ENCODE measurements at regions of chr18 and their contacts with region 1.

Region 1: GRCh38 chr18:70454704-70455322 is 166.0 kb downstream of the SOCS6 start:
- DNase-seq: peak; percentile 79
- ATAC-seq: peak; percentile 86
- H3K4me3 ChIP-seq: no peak overlapping the region
- H3K27ac ChIP-seq: no peak overlapping the region
- H3K4me1 ChIP-seq: peaks cover 2% of the 10 kb centered on the region; the same call in 1 of the 2 replicates
- H3K27me3 ChIP-seq: no peaks in the 10 kb centered on the region
- CTCF ChIP-seq: peak; percentile 76
- POLR2A ChIP-seq: no peak
- RAD21 ChIP-seq: peak; percentile 77

Region 2: GRCh38 chr18:70082430-70082829 is 372.4 kb before region 1 on chr18:
- CTCF ChIA-PET with region 1: no interaction called
- POLR2A ChIA-PET with region 1: no interaction called
- dilution Hi-C with region 1: no loop called
- in situ Hi-C with region 1: no loop called
- intact Hi-C with region 1: loop called (anchors 5 kb)
- DNase-seq: no peak
- ATAC-seq: no peak
- H3K4me3 ChIP-seq: no peak overlapping the region
- H3K27ac ChIP-seq: no peak overlapping the region
- H3K4me1 ChIP-seq: peaks cover 1% of the 10 kb centered on the region; the same call in 1 of the 2 replicates
- H3K27me3 ChIP-seq: no peaks in the 10 kb centered on the region
- CTCF ChIP-seq: no peak
- POLR2A ChIP-seq: no peak
- RAD21 ChIP-seq: no peak

Region 3: GRCh38 chr18:70172225-70172624 is 282.6 kb before region 1 on chr18:
- CTCF ChIA-PET with region 1: interaction called, 5 read pairs
- POLR2A ChIA-PET with region 1: interaction called, 4 read pairs
- dilution Hi-C with region 1: no loop called
- in situ Hi-C with region 1: no loop called
- intact Hi-C with region 1: loop called (anchors 2 kb)
- DNase-seq: peak; percentile 39
- ATAC-seq: peak; percentile 48; the same call in 1 of the 2 replicates
- H3K4me3 ChIP-seq: no peak overlapping the region
- H3K27ac ChIP-seq: no peak overlapping the region
- H3K4me1 ChIP-seq: no peaks in the 10 kb centered on the region; the same call in 1 of the 2 replicates
- H3K27me3 ChIP-seq: no peaks in the 10 kb centered on the region
- CTCF ChIP-seq: peak; percentile 66
- POLR2A ChIP-seq: no peak
- RAD21 ChIP-seq: peak; percentile 67

Region 4: DNA sequence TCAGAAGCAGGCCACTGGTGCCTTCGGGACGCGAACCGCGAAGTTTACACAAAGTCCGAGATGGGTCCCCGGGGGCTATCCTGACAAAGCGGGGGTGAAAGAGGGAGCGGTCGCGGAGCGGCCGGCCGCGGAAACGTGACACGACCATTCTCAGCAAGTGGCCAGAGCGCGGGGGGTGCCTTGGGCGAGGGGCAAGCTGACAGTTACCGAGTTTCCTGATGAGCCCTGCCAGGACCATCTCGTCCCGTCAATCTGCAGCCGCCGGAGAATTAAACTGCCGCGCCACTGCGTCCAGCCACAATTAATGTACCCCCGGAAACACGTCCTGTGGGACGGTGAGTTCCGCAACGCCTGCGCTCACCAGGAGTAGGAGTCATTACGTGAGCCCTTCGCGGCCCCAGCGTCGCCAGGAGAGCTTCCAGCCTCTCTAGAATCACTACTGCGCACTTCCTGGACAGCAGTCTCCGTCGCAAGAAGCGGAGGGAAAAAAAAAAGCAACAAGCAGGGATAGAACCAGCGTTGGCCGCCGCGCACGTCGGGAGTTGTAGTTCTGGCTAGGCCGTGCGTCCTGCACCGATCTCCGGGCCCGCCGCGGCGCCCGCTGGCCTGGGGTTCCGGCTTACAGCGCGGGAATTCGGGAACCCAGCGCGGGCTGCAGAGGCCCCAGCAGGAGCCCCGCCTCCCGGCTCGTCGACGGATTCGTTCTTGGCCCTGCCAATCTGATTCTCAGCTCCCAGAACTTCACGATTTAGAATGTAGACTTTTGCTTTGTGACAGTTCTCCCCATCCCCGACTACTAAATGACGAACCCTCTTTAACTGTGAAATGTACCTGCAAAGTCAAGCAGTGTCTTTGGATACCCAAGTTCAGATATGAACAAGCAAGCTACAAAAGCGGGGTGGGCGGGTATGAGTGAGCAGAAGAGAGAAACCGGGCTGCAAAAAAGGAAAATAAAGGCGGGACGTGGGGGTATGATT is 249.1 kb before region 1 on chr18 and contains the start of gene RTTN:
- CTCF ChIA-PET with region 1: interaction called, 3 read pairs
- POLR2A ChIA-PET with region 1: no interaction called
- dilution Hi-C with region 1: no loop called
- in situ Hi-C with region 1: no loop called
- intact Hi-C with region 1: loop called (anchors 2 kb)
- DNase-seq: peak; percentile 94
- ATAC-seq: peak; percentile 99
- H3K4me3 ChIP-seq: peak within 1 kb of the TSS; percentile 91
- H3K27ac ChIP-seq: peak within 1 kb of the TSS; percentile 98
- H3K4me1 ChIP-seq: no peaks in the 10 kb centered on the region
- H3K27me3 ChIP-seq: no peaks in the 10 kb centered on the region
- CTCF ChIP-seq: no peak
- POLR2A ChIP-seq: no peak
- RAD21 ChIP-seq: peak; percentile 18
- total RNA-seq, gene RTTN: 19.9 and 21.9 TPM in 2 replicates

Region 5: DNA sequence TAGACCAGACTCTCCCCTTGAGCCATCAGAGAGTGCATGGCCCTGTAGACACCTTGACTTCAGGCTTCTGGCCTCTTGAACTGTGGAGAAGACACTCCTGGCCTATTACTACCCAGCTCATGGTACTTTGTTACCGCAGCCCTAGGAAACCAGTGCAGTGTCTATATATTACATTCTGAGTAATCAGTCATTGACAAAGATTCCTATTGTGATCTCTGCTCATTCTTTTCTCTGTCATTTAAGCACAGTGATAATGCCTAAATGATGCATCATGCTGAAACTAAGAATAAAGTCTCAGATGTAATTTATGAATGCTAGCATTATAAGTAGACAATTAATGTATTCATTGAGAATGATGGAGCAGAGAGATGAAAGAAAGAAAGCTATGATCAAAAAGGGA is 437.6 kb after region 1 on chr18:
- CTCF ChIA-PET with region 1: no interaction called
- POLR2A ChIA-PET with region 1: no interaction called
- dilution Hi-C with region 1: no loop called
- in situ Hi-C with region 1: no loop called
- intact Hi-C with region 1: no loop called
- DNase-seq: no peak
- ATAC-seq: no peak
- H3K4me3 ChIP-seq: no peak overlapping the region
- H3K27ac ChIP-seq: no peak overlapping the region
- H3K4me1 ChIP-seq: no peaks in the 10 kb centered on the region
- H3K27me3 ChIP-seq: no peaks in the 10 kb centered on the region
- CTCF ChIP-seq: no peak
- POLR2A ChIP-seq: no peak
- RAD21 ChIP-seq: no peak

Measured in IMR-90 (cell line).